CD14-positive monocyte (primary cell): ENCODE measurements at regions of chr6 and their contacts with region 1.

Region 1: GRCh38 chr6:52284460-52285176 is at the start of gene MCM3:
- DNase-seq: peak; percentile 98 to 99 (median 98)
- H3K4me3 ChIP-seq: peak within 1 kb of the TSS; percentile 60 to 92 (median 86)
- H3K4me3 Mint-ChIP-seq: no peak within 1 kb of the TSS
- H3K27ac ChIP-seq: peak within 1 kb of the TSS; percentile 5 to 66
- H3K27ac Mint-ChIP-seq: peak within 1 kb of the TSS in 1 of 7 donors; percentile 9
- H3K4me1 ChIP-seq: peaks cover 21 to 30% of the 10 kb centered on the region in 2 donors
- H3K4me1 Mint-ChIP-seq: peaks cover 28% of the 10 kb centered on the region
- H3K27me3 ChIP-seq: no peaks in the 10 kb centered on the region
- H3K27me3 Mint-ChIP-seq: no peaks in the 10 kb centered on the region
- CTCF ChIP-seq: no peak
- polyA plus RNA-seq, gene MCM3: 10.7 to 15.3 (median 12.1) TPM

Region 2: GRCh38 chr6:52243282-52243893 is 41.2 kb before region 1 on chr6:
- intact Hi-C with region 1: no loop called
- DNase-seq: no peak
- H3K4me3 ChIP-seq: no peak overlapping the region
- H3K4me3 Mint-ChIP-seq: no peak overlapping the region
- H3K27ac ChIP-seq: no peak overlapping the region
- H3K27ac Mint-ChIP-seq: no peak overlapping the region
- H3K4me1 ChIP-seq: no peaks in the 10 kb centered on the region
- H3K4me1 Mint-ChIP-seq: no peaks in the 10 kb centered on the region
- H3K27me3 ChIP-seq: no peaks in the 10 kb centered on the region
- H3K27me3 Mint-ChIP-seq: peaks cover 0 to 3% (median 2%) of the 10 kb centered on the region in 3 donors
- CTCF ChIP-seq: no peak

Region 3: GRCh38 chr6:52352239-52353008 is 67.8 kb after region 1 on chr6:
- intact Hi-C with region 1: loop called in 1 of 2 experiments (anchors 5 kb)
- DNase-seq: peak; percentile 93 to 99 (median 98)
- H3K4me3 ChIP-seq: peak overlapping the region in 2 of 3 experiments; percentile 27 to 61
- H3K4me3 Mint-ChIP-seq: peak overlapping the region; percentile 40 to 76
- H3K27ac ChIP-seq: peak overlapping the region; percentile 81 to 82
- H3K27ac Mint-ChIP-seq: peak overlapping the region; percentile 86 to 97 (median 92)
- H3K4me1 ChIP-seq: peaks cover 34 to 36% of the 10 kb centered on the region in 2 donors
- H3K4me1 Mint-ChIP-seq: peaks cover 36% of the 10 kb centered on the region
- H3K27me3 ChIP-seq: no peaks in the 10 kb centered on the region
- H3K27me3 Mint-ChIP-seq: peaks cover 0 to 1% (median 0%) of the 10 kb centered on the region in 3 donors
- CTCF ChIP-seq: no peak

Region 4: GRCh38 chr6:52361945-52362442 is 77.4 kb after region 1 on chr6 and contains the start of gene PAQR8:
- intact Hi-C with region 1: loop called (anchors 5 kb)
- DNase-seq: peak; percentile 57 to 69 (median 68)
- H3K4me3 ChIP-seq: peak within 1 kb of the TSS; percentile 81 to 98 (median 90)
- H3K4me3 Mint-ChIP-seq: peak within 1 kb of the TSS; percentile 99
- H3K27ac ChIP-seq: peak within 1 kb of the TSS; percentile 86 to 92
- H3K27ac Mint-ChIP-seq: peak within 1 kb of the TSS; percentile 89 to 94 (median 94)
- H3K4me1 ChIP-seq: peaks cover 31 to 39% of the 10 kb centered on the region in 2 donors
- H3K4me1 Mint-ChIP-seq: peaks cover 39% of the 10 kb centered on the region
- H3K27me3 ChIP-seq: no peaks in the 10 kb centered on the region
- H3K27me3 Mint-ChIP-seq: peaks cover 0 to 1% (median 1%) of the 10 kb centered on the region in 3 donors
- CTCF ChIP-seq: no peak
- polyA plus RNA-seq, gene PAQR8: 2.4 to 17.4 (median 6.8) TPM

Region 5: DNA sequence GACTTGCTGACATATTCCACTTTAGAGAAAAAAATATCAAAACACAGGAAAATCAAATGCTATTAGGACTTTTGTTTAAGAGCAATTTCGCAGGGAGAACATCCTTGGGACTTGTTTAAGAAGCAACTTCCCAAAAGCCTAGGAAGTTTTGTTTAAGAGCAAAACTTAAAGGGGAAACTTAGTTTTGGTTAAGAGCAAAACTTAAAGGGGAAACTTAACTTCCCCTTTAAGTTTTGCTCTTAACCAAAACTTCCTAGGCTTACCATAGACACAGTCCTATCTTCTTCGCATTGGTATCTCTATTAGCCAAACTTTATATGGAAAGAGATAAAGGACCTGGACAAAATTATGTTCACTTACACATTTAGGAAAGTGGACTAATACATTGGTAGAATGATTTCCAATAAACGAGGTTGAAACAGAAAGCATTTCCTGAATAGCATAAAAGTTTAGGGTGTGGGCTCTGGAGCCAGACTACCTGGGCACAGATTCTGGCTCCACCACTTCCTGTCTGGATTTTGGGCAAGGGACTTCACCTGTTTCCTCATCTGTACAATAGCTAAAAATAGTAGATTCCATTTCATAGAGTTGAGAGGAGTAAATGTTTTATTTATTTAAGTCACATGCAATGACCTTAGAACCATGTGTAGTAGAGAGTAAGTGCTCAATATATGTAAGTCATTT is 93.1 kb after region 1 on chr6:
- intact Hi-C with region 1: no loop called
- DNase-seq: peak; percentile 12 to 60 (median 36)
- H3K4me3 ChIP-seq: peak overlapping the region in 1 of 3 experiments; percentile 42
- H3K4me3 Mint-ChIP-seq: peak overlapping the region in 1 of 2 donors; percentile 72
- H3K27ac ChIP-seq: peak overlapping the region in 1 of 2 donors; percentile 21
- H3K27ac Mint-ChIP-seq: peak overlapping the region in 6 of 7 donors; percentile 12 to 74 (median 44)
- H3K4me1 ChIP-seq: peaks cover 33 to 36% of the 10 kb centered on the region in 2 donors
- H3K4me1 Mint-ChIP-seq: peaks cover 39% of the 10 kb centered on the region
- H3K27me3 ChIP-seq: no peaks in the 10 kb centered on the region
- H3K27me3 Mint-ChIP-seq: no peaks in the 10 kb centered on the region
- CTCF ChIP-seq: no peak

Region 6: GRCh38 chr6:52399511-52400312 is 115.1 kb after region 1 on chr6:
- intact Hi-C with region 1: loop called in 1 of 2 experiments (anchors 10 kb)
- DNase-seq: peak; percentile 21 to 52 (median 39)
- H3K4me3 ChIP-seq: no peak overlapping the region
- H3K4me3 Mint-ChIP-seq: no peak overlapping the region
- H3K27ac ChIP-seq: no peak overlapping the region
- H3K27ac Mint-ChIP-seq: peak overlapping the region in 1 of 7 donors; percentile 10
- H3K4me1 ChIP-seq: peaks cover 0 to 3% of the 10 kb centered on the region in 2 donors
- H3K4me1 Mint-ChIP-seq: peaks cover 13% of the 10 kb centered on the region
- H3K27me3 ChIP-seq: no peaks in the 10 kb centered on the region
- H3K27me3 Mint-ChIP-seq: no peaks in the 10 kb centered on the region
- CTCF ChIP-seq: peak; percentile 86

Region 7: DNA sequence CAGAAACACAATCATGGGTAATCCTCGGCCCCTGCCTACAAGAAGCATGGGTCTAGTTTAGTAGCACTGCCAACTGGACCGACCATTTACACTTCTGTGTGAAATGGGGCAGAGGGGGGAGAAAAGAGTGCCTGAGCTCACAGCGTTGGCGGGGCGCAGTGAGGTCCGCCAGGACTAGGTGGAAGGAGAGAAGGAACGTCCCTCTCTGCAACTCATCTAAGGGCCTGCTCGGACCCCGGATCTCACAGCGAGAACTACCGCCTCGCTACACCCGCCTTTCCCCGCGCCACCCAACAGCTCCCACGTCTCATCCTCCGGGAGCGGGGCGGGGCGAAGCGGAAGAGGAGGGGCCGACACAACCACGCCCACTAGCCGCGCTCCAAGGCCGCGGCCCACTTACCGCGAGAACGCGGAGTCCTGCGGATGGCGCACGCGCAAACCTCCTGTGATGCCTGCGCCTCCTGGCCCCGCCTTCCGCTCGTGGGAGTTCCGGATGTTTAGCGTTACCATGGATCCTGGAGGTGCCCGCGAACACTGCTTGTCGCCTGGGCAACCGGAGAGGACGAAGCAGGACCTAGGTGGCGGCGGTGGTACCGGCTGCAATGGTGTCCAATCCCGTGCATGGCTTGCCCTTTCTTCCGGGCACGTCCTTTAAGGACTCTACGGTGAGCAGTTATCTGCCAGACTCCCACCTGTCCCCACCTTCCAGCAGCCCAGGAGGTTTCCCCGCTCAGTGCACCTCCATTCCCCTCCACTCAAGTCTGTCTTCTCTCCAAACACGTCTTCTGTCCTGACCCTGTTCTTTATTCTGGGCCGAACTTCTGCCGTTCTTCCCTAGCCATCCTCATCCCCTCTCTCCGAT is 135.4 kb after region 1 on chr6 and contains the start of gene EFHC1:
- intact Hi-C with region 1: loop called (anchors 5 kb)
- DNase-seq: peak; percentile 96 to 99 (median 97)
- H3K4me3 ChIP-seq: peak within 1 kb of the TSS; percentile 62 to 91 (median 81)
- H3K4me3 Mint-ChIP-seq: no peak within 1 kb of the TSS
- H3K27ac ChIP-seq: peak within 1 kb of the TSS in 1 of 2 donors; percentile 64
- H3K27ac Mint-ChIP-seq: peak within 1 kb of the TSS in 2 of 7 donors; percentile 67 to 72
- H3K4me1 ChIP-seq: peaks cover 14 to 20% of the 10 kb centered on the region in 2 donors
- H3K4me1 Mint-ChIP-seq: peaks cover 18% of the 10 kb centered on the region
- H3K27me3 ChIP-seq: no peaks in the 10 kb centered on the region
- H3K27me3 Mint-ChIP-seq: peaks cover 0 to 3% (median 1%) of the 10 kb centered on the region in 3 donors
- CTCF ChIP-seq: no peak
- polyA plus RNA-seq, gene EFHC1: 0.30 to 13.5 (median 2.3) TPM

Region 8: GRCh38 chr6:52577022-52577777 is 292.6 kb after region 1 on chr6 and contains the start of gene TRAM2:
- intact Hi-C with region 1: loop called (anchors 10 kb)
- DNase-seq: peak; percentile 57 to 66 (median 62)
- H3K4me3 ChIP-seq: peak within 1 kb of the TSS; percentile 78 to 87 (median 86)
- H3K4me3 Mint-ChIP-seq: peak within 1 kb of the TSS; percentile 88 to 95
- H3K27ac ChIP-seq: peak within 1 kb of the TSS; percentile 62 to 81
- H3K27ac Mint-ChIP-seq: peak within 1 kb of the TSS; percentile 75 to 88 (median 84)
- H3K4me1 ChIP-seq: peaks cover 39 to 51% of the 10 kb centered on the region in 2 donors
- H3K4me1 Mint-ChIP-seq: peaks cover 53% of the 10 kb centered on the region
- H3K27me3 ChIP-seq: no peaks in the 10 kb centered on the region
- H3K27me3 Mint-ChIP-seq: peaks cover 0 to 2% (median 0%) of the 10 kb centered on the region in 3 donors
- CTCF ChIP-seq: no peak
- polyA plus RNA-seq, gene TRAM2: 4.7 to 11.7 (median 5.9) TPM